ENCODE measurements at regions of chr9 and their contacts with region 1.

Region 1: DNA sequence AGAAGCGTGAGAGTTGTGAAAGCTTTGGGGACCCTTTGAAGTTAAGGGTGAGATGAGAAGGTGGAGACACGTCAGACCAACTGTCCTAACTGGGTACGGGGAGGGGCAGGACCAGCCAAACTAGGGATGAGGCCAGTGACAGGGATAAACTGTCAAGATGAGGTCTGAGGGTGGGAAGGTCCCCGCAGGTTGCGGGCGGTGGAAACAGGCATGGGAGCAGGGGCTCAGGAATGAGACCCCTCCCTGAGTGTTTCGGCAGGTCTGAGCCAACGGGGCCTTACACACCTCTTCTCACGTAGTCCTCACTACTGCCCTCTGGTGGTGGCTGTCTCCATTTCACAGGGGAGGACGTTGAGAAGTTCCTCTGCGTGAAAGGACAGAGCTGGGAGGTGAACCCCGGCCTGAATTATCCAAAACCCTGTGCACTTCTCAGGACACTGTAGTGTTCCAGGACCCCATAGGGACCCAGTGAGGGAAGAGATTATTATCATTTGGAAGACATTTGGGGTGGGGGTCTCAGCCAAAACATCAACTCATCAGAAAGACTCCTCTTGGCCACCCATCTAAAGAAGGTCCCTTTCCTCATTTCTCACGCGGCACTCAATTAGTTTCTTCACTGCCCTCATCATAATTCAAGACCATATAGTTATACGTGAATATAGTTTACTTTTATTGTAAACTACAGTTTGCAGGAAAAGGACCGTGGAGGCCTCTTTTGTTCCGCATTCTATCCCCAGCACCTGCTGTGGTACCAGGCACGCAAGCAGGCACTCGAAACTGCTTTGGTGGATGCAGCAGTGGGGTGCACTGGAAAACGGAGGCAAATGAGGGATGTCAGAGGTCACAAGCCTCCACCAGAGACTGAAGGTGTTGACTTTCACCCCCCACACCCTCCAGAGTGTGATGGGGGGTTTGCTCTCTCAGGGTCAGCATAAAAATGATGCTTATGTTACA is 21.7 kb upstream of the NANS start:
- DNase-seq: no peak
- H3K4me3 ChIP-seq: no peak overlapping the region
- H3K27ac ChIP-seq: peak overlapping the region; percentile 90
- H3K27me3 ChIP-seq: no peaks in the 10 kb centered on the region
- CTCF ChIP-seq: peak; percentile 74

Region 2: GRCh38 chr9:98022447-98022846 is 12.4 kb before region 1 on chr9:
- CTCF ChIA-PET with region 1: interaction called, 28 read pairs
- POLR2A ChIA-PET with region 1: no interaction called
- DNase-seq: no peak
- H3K4me3 ChIP-seq: no peak overlapping the region
- H3K27ac ChIP-seq: no peak overlapping the region
- H3K27me3 ChIP-seq: no peaks in the 10 kb centered on the region
- CTCF ChIP-seq: no peak

Region 3: GRCh38 chr9:98045234-98046179 is 10.6 kb after region 1 on chr9:
- CTCF ChIA-PET with region 1: interaction called, 24 read pairs
- POLR2A ChIA-PET with region 1: no interaction called
- DNase-seq: no peak
- H3K4me3 ChIP-seq: no peak overlapping the region
- H3K27ac ChIP-seq: peak overlapping the region; percentile 39
- H3K27me3 ChIP-seq: no peaks in the 10 kb centered on the region
- CTCF ChIP-seq: no peak